Activated CD4-positive, alpha-beta T cell treated with anti-CD3 and anti-CD28 coated beads, Interleukin-2, amount 10 ng/mL, durations not matched to agents 7 days and 5 days (primary cell): ENCODE measurements at regions of chr6 and their contacts with region 1.

Region 1: DNA sequence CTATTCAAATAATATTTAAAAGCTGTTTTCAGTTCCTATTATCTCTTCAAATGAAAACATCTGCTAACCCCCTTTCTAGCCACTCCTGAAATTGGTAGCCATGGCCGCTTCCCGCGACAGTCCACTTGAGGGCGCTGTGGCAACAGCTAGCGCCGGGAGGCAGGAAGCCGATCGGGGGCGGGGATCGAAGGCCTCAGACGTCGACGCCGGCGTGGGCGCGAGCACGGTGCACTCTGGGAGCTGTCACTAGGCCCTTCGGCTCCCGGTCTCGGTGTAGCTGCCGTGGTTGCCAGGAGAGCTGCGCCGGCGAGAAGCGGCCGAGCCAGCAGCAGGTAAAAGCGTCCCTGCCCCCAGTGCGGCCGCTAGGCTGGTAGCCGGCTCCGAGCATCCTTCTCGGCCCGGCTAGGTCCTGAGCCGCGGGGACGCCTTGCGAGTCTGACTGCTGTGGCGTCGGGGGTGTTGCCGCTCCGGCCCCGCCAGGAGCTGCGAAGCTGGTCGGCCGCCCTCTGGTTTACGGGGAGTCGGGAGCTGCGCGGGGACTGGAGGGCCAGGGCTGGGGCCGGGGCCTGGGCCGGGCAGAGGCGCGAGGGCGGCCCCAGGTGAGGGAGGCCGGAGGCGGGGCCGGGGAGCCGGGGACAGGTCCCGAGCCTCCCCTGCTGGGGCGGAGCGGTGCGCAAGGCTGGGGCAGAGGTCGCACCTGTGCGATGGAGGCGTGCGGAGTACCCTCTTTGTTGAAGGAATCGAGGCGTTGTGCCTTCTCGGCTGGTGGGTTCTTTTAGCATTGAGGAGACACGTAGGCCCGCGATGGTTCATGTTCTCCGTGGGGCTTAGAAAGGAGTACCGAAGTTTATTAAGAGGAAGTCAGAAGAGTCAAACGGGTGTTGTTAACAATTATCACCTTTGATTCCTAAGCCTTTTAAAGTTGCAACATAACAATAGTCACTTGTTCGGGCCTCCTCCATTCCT is at the start of gene DOP1A:
- DNase-seq: peak; percentile 96
- H3K4me3 Mint-ChIP-seq: peak within 1 kb of the TSS; percentile 88
- H3K27ac Mint-ChIP-seq: peak within 1 kb of the TSS; percentile 88
- H3K4me1 Mint-ChIP-seq: peaks cover 47% of the 10 kb centered on the region
- H3K27me3 Mint-ChIP-seq: no peaks in the 10 kb centered on the region
- total RNA-seq, gene DOP1A: 15.4 to 18.5 TPM

Region 2: DNA sequence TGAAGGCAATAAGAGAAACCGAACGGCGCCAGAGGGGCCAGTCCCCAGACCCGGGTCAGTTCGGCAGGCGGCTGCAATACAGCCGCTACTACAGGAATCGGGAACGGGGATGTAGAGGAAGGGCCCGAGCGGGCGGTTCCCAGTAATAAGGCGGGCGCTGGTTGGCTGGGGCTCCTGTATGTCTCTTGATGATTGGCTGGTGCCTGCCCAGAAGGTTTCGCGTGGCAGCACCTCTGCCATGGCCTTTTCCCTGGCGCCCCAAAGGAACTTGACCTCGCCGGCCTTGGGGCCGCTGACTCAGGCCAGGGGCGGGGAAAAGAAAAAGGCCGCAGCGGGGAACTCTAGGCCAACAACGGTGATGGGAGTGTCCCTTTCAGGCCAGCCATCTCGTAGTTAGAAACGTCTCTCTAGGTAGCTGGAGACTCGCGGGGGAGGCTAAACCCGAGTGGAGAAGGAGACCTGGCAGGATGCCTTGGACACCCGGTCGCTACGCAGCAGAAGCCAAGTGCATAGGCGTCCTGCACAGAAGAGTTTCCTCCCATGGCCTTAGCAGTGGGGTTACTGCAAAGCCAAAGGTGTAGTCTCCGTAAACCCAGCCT is 820.0 kb before region 1 on chr6 and contains the start of gene IBTK:
- CTCF ChIA-PET with region 1: interaction called, 12 read pairs
- POLR2A ChIA-PET with region 1: no interaction called
- DNase-seq: peak; percentile 89
- H3K4me3 Mint-ChIP-seq: peak within 1 kb of the TSS; percentile 95
- H3K27ac Mint-ChIP-seq: peak within 1 kb of the TSS; percentile 92
- H3K4me1 Mint-ChIP-seq: peaks cover 36% of the 10 kb centered on the region
- H3K27me3 Mint-ChIP-seq: no peaks in the 10 kb centered on the region
- total RNA-seq, gene IBTK: 26.8 to 27.3 TPM

Region 3: GRCh38 chr6:82924799-82925535 is 142.8 kb before region 1 on chr6:
- CTCF ChIA-PET with region 1: no interaction called
- POLR2A ChIA-PET with region 1: no interaction called
- DNase-seq: no peak
- H3K4me3 Mint-ChIP-seq: no peak overlapping the region
- H3K27ac Mint-ChIP-seq: no peak overlapping the region
- H3K4me1 Mint-ChIP-seq: no peaks in the 10 kb centered on the region
- H3K27me3 Mint-ChIP-seq: no peaks in the 10 kb centered on the region

Region 4: GRCh38 chr6:83086751-83087150 is 19.0 kb after region 1 on chr6:
- CTCF ChIA-PET with region 1: interaction called, 42 read pairs
- POLR2A ChIA-PET with region 1: no interaction called
- DNase-seq: no peak
- H3K4me3 Mint-ChIP-seq: peak overlapping the region; percentile 41
- H3K27ac Mint-ChIP-seq: no peak overlapping the region
- H3K4me1 Mint-ChIP-seq: peaks cover 18% of the 10 kb centered on the region
- H3K27me3 Mint-ChIP-seq: no peaks in the 10 kb centered on the region

Region 5: DNA sequence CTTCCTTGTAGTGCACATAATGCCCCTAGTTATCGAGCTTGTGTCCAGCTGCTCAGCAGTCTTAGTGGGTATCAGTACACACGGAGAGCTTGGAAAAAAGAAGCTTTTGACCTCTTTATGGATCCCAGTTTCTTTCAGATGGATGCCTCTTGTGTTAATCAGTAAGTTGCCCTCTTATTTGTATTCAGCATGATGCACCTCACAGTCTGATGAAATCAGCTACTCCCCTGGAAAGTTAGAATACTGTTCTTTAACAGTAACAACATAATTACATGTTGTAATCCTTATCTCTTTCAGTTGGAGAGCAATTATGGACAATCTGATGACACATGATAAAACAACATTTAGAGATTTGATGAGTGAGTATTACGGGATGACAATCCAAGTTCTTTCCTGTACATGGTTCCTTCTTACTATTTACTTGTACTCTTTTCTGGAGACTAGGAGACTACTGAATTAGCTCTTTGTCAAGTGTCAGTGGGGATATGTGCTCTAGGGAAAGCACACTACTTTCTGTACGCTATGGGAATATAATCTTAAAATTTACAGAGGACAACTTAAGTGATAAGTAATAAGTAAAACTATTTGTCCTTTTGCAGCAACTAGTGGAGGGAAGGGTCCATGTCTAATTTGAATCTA is 86.3 kb after region 1 on chr6:
- CTCF ChIA-PET with region 1: no interaction called
- POLR2A ChIA-PET with region 1: no interaction called
- DNase-seq: no peak
- H3K4me3 Mint-ChIP-seq: no peak overlapping the region
- H3K27ac Mint-ChIP-seq: no peak overlapping the region
- H3K4me1 Mint-ChIP-seq: no peaks in the 10 kb centered on the region
- H3K27me3 Mint-ChIP-seq: no peaks in the 10 kb centered on the region

Region 6: DNA sequence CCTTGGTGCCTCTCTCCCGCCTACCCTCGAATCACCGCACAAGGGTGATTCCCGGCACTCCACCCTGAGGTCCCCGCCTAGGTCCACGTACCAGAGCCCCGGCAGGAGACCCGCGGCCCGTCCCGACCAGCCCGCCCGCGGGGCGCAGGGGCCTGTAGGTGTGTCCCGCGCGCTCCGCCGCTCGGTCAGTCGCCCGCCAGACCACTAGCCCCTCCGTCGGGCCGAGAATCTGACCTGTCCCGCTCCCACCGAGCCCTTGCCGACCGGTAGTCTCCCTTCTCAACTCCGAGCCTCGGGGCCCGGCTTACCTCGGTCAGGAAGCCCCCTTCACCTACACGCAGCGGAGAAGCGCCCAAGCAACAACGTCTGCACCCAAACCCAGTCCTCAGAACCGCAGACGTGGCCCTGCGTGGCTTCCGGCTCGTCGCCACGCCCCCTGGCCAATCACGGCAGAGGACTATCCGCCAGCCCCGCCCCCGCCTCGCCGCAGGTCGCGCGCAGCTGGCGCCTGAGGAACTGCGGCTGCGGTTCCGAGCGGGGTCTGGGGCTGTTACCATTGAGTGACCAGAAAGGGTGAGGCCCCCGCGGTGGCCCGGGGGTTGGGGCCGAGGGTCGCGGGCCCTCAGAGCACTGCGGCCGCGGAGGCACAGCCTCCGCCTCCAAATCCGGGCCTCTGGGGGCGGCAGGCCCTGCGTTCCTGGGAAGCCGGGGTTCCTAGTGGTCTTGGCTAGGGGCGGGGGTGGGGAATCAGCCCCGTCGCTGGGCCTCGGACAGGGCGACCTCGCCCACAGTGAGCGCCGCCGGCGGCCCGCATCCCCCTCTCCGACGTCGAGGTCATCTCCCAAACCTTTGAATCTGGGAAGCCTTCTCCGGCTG is 125.4 kb after region 1 on chr6 and contains the starts of genes PGM3 and RWDD2A:
- CTCF ChIA-PET with region 1: interaction called, 28 read pairs
- POLR2A ChIA-PET with region 1: interaction called, 5 read pairs
- DNase-seq: peak; percentile 90
- H3K4me3 Mint-ChIP-seq: peak within 1 kb of the TSS; percentile 98
- H3K27ac Mint-ChIP-seq: peak within 1 kb of the TSS; percentile 95
- H3K4me1 Mint-ChIP-seq: peaks cover 36% of the 10 kb centered on the region
- H3K27me3 Mint-ChIP-seq: peaks cover 9% of the 10 kb centered on the region
- total RNA-seq, gene PGM3: 12.3 to 14.1 TPM
- total RNA-seq, gene RWDD2A: 1.4 to 1.6 TPM

Region 7: DNA sequence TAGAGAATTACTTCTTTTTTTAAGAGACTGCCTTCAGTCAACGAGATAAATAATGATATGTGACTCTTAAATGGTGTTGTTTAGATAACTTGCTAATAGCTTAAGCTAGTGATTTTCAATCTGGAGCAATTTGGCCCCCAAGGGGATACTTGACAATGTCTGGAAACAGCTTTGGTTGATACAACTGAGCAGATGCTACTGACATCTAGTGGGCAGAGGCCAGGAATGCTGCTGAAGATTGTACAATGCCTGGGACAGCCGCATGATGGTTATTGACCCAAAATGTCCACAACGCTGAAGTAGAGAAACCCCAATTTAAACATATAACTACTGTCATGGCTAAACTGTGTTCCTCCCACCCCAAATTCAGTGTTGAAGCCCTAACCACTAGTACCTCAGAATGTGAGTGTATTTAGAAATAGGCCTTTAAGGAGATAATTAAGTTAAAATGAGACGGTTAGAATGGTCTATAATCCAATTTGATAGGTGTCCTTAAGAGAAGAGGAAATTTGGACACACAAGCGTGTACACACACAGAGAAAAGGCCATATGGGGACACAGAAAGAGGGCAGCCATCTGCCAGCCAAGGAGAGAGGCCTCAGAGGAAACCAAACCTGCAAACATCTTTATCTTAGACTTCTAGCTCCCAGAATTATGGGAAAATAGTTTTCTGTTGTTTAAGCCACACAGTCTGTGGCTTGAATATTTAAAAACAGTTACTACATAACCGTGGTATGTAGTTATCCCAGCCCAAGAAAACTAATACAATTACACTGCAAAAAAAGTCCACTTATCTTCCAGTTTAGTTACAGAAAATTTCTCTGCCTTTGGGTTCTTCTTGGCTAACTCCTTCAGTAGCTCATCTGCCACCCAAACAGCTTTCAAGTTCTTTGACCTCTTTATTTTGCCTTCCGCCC is 147.7 kb after region 1 on chr6:
- CTCF ChIA-PET with region 1: interaction called, 39 read pairs
- POLR2A ChIA-PET with region 1: no interaction called
- DNase-seq: peak; percentile 65
- H3K4me3 Mint-ChIP-seq: no peak overlapping the region
- H3K27ac Mint-ChIP-seq: no peak overlapping the region
- H3K4me1 Mint-ChIP-seq: no peaks in the 10 kb centered on the region
- H3K27me3 Mint-ChIP-seq: peaks cover 18% of the 10 kb centered on the region

Region 8: GRCh38 chr6:83609248-83609647 is 541.5 kb after region 1 on chr6:
- CTCF ChIA-PET with region 1: no interaction called
- POLR2A ChIA-PET with region 1: no interaction called
- DNase-seq: no peak
- H3K4me3 Mint-ChIP-seq: no peak overlapping the region
- H3K27ac Mint-ChIP-seq: no peak overlapping the region
- H3K4me1 Mint-ChIP-seq: no peaks in the 10 kb centered on the region
- H3K27me3 Mint-ChIP-seq: no peaks in the 10 kb centered on the region